ENCODE measurements at regions of chr2 and their contacts with region 1.

Region 1: GRCh38 chr2:199911052-199911876 is at the start of gene C2orf69:
- DNase-seq: peak; percentile 86
- ATAC-seq: peak; percentile 83
- H3K4me3 Mint-ChIP-seq: peak within 1 kb of the TSS; percentile 94
- H3K27ac Mint-ChIP-seq: peak within 1 kb of the TSS; percentile 94
- H3K4me1 Mint-ChIP-seq: peaks cover 35% of the 10 kb centered on the region
- H3K27me3 Mint-ChIP-seq: no peaks in the 10 kb centered on the region
- CTCF ChIP-seq: no peak
- total RNA-seq, gene C2orf69: 12.1 and 12.6 TPM in 2 replicates

Region 2: GRCh38 chr2:199955339-199956261 is 44.3 kb after region 1 on chr2 and contains the starts of genes MAIP1 and TYW5:
- CTCF ChIA-PET with region 1: no interaction called
- POLR2A ChIA-PET with region 1: no interaction called
- intact Hi-C with region 1: loop called (anchors 1 kb)
- DNase-seq: peak; percentile 75
- ATAC-seq: peak; percentile 87
- H3K4me3 Mint-ChIP-seq: peak within 1 kb of the TSS; percentile 99
- H3K27ac Mint-ChIP-seq: peak within 1 kb of the TSS; percentile 91
- H3K4me1 Mint-ChIP-seq: peaks cover 48% of the 10 kb centered on the region
- H3K27me3 Mint-ChIP-seq: no peaks in the 10 kb centered on the region
- CTCF ChIP-seq: no peak
- total RNA-seq, gene MAIP1: 20.2 and 20.7 TPM in 2 replicates
- total RNA-seq, gene TYW5: 10.5 and 12.5 TPM in 2 replicates

Region 3: DNA sequence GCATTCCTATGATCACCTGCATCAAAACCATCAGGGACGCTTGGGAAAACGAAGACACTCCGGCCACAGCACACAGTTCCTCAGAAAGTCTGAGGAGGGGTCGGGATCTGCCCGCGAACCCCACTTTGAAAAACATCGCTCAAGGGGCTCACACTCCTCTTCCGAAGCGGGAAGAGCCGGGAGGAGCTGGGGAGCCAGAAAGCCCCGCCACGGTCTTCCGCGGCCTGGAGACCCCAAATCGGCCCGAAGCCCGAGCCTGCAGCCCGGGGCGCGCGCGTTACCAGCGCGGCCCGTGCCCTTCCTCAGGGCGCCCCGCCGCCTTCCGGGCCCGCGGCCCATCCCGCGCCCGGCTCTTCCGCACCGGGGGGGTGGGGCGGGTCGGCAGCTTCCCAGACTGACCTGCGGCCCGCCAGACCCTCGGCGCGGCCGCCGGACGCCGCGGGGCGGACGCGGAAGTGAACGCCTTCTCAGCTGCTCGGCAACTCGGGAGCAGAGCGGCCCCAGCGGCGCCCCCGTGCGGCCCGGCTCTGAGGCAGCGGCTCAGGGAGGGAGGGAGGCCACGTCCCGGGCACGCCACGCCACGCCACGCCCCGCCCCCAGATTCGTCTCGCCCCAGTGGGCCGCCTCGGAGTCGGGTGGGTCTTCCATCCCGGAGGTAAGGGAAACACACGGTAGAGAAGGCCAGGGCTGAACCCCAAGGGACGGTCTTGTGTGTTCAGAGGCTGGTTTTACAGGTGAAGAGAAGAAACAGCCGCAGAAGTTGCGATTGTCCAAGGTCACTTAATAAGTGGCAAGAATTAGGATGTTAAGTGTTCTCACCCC is 598.6 kb after region 1 on chr2 and contains the start of gene KCTD18:
- CTCF ChIA-PET with region 1: no interaction called
- POLR2A ChIA-PET with region 1: no interaction called
- intact Hi-C with region 1: loop called (anchors 1 kb)
- DNase-seq: peak; percentile 93
- ATAC-seq: peak; percentile 99
- H3K4me3 Mint-ChIP-seq: peak within 1 kb of the TSS; percentile 90
- H3K27ac Mint-ChIP-seq: peak within 1 kb of the TSS; percentile 88
- H3K4me1 Mint-ChIP-seq: peaks cover 27% of the 10 kb centered on the region
- H3K27me3 Mint-ChIP-seq: peaks cover 2% of the 10 kb centered on the region
- CTCF ChIP-seq: peak; percentile 62
- total RNA-seq, gene KCTD18: 18.5 and 18.9 TPM in 2 replicates

Region 4: DNA sequence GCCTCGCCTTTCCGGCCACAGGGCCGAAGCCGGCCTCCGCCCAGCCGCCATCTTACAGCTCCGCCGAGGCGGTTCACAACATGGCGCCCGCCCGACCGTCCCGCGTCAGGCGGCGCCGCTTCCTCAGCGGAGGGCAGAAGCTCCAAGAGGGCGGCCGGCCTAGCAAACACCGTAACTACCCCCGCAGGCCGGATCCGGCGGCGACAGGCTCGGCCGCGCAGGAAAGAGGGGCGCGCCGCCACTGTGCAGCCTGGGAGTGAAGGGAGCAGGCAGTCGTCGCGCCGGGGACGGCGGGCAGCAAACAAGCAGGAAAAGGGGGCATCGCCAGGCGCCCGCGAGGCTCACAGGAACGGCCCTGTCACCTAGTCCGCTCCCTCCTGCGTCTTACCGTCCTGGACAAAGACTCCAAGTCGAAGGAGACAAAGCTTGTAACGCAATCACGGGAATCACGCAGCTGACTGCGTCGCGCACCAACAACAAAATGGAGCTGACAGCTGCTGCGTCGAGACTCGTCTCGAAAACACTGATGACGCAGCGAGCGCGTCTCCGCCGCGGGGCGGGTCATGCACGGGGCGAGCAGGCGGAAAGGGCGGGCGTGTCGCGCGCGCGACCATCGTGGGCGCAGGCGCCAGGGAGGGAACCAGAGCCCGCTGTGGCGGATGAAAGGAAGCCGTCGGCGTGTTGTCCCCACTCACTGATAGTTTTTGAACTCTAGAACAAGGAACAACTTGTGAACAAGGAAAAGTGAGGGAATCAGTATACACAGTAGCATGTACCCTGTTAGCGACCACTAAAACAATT is 953.1 kb after region 1 on chr2 and contains the start of gene CLK1:
- CTCF ChIA-PET with region 1: no interaction called
- POLR2A ChIA-PET with region 1: no interaction called
- intact Hi-C with region 1: loop called (anchors 5 kb)
- DNase-seq: peak; percentile 90
- ATAC-seq: peak; percentile 82
- H3K4me3 Mint-ChIP-seq: peak within 1 kb of the TSS; percentile 100
- H3K27ac Mint-ChIP-seq: peak within 1 kb of the TSS; percentile 100
- H3K4me1 Mint-ChIP-seq: peaks cover 41% of the 10 kb centered on the region
- H3K27me3 Mint-ChIP-seq: no peaks in the 10 kb centered on the region
- CTCF ChIP-seq: no peak
- total RNA-seq, gene CLK1: 173 and 203 TPM in 2 replicates